ENCODE measurements at regions of chr2 and their contacts with region 1.

Region 1: DNA sequence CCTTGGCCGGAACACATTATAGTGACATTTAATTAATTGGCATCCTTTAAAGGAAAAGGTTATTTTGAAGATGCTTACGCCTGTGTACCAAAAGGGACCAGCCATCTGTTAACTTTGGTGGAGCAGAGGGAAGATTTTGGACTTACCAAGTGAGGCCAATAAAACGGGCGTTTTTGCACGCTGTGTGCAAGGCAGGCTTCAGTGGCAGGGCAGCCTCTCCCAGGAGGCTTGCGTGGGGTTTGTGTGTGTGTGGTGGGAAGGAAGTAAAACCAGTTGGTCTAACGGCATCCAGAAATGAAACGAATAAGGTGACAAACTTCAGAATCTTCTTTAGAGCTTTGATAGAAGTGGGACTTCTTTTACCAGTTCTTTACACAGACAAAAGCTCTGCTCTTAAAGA is 191.7 kb downstream of the PRKCE start:
- DNase-seq: no peak

Region 2: DNA sequence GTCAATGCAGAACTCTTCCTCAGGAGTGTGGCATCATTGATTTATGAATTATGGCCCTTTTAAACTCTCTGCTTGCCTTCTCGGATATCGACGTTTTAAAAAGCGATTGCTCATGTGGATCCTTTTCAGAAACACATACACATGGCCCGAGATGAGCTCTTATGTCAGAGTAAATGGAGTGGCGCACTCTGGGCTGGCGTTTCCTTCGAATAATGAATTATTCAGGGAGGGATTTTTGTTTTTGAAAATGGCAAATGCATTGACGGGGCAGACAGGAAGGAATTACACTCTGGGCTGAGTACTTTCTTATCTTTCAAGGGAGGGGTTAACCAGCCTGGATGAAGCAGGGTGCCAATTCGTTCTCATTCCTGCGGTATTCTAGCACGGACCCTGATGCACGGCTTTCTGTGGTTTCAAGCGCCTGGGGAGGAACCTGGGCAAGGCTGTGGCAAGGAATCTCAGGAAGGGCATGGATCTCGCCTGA is 49.0 kb before region 1 on chr2:
- intact Hi-C with region 1: loop called (anchors 5 kb)
- DNase-seq: no peak